Right cardiac atrium (tissue), 5 donors: ENCODE measurements at regions of chr1 and their contacts with region 1.

Region 1: GRCh38 chr1:31564134-31564989 is 12.0 kb upstream of the TINAGL1 start:
- DNase-seq: no peak
- ATAC-seq: peak; percentile 58 to 78
- H3K4me3 ChIP-seq: no peak overlapping the region
- H3K27ac ChIP-seq: no peak overlapping the region
- H3K4me1 ChIP-seq: peaks cover 6% of the 10 kb centered on the region
- H3K27me3 ChIP-seq: no peaks in the 10 kb centered on the region

Region 2: DNA sequence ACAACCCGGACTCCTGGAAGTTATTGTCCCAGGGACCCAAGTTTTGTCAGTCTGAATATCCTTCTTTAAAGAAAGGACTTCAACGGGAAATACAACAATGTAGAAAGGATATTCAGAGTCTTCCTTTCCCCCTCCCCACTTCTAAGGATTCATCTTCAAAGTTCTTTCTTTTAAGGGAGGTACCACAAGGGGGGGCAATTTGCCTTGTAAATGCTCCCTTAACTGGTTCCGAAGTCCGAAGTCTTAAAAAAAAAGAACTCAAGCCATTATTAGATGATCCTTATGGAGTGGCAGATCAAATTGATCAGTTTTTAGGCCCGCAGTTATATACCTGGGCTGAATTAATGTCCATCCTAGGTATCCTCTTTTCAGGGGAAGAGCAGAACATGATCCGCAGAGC is 104.3 kb before region 1 on chr1:
- intact Hi-C with region 1: no loop called
- DNase-seq: no peak
- ATAC-seq: no peak
- H3K4me3 ChIP-seq: no peak overlapping the region
- H3K27ac ChIP-seq: no peak overlapping the region
- H3K4me1 ChIP-seq: no peaks in the 10 kb centered on the region
- H3K27me3 ChIP-seq: peaks cover 2% of the 10 kb centered on the region

Region 3: GRCh38 chr1:31593770-31594632 is 29.6 kb after region 1 on chr1:
- intact Hi-C with region 1: loop called in 3 of 4 experiments (anchors 1 to 2 kb)
- DNase-seq: peak; percentile 84 to 92 (median 88)
- ATAC-seq: peak; percentile 75
- H3K4me3 ChIP-seq: no peak overlapping the region
- H3K27ac ChIP-seq: no peak overlapping the region
- H3K4me1 ChIP-seq: peaks cover 9% of the 10 kb centered on the region
- H3K27me3 ChIP-seq: no peaks in the 10 kb centered on the region

Region 4: GRCh38 chr1:31617917-31618660 is 53.7 kb after region 1 on chr1:
- intact Hi-C with region 1: loop called in 2 of 4 experiments (anchors 2 to 10 kb)
- DNase-seq: peak; percentile 39 to 78 (median 72)
- ATAC-seq: peak; percentile 55 to 62
- H3K4me3 ChIP-seq: peak overlapping the region; percentile 75
- H3K27ac ChIP-seq: no peak overlapping the region
- H3K4me1 ChIP-seq: peaks cover 8% of the 10 kb centered on the region
- H3K27me3 ChIP-seq: no peaks in the 10 kb centered on the region